Activated CD4-positive, alpha-beta memory T cell treated with anti-CD3 and anti-CD28 coated beads, Interleukin-2, amount 10 ng/mL, durations not matched to agents 7 days and 5 days (primary cell): ENCODE measurements at regions of chr1 and their contacts with region 1.

Region 1: GRCh38 chr1:5514519-5515183 is 477.6 kb downstream of the NPHP4 start:
- DNase-seq: peak; percentile 67
- H3K4me3 Mint-ChIP-seq: no peak overlapping the region
- H3K27ac Mint-ChIP-seq: no peak overlapping the region
- H3K4me1 Mint-ChIP-seq: no peaks in the 10 kb centered on the region
- H3K27me3 Mint-ChIP-seq: peaks cover 9% of the 10 kb centered on the region

Region 2: DNA sequence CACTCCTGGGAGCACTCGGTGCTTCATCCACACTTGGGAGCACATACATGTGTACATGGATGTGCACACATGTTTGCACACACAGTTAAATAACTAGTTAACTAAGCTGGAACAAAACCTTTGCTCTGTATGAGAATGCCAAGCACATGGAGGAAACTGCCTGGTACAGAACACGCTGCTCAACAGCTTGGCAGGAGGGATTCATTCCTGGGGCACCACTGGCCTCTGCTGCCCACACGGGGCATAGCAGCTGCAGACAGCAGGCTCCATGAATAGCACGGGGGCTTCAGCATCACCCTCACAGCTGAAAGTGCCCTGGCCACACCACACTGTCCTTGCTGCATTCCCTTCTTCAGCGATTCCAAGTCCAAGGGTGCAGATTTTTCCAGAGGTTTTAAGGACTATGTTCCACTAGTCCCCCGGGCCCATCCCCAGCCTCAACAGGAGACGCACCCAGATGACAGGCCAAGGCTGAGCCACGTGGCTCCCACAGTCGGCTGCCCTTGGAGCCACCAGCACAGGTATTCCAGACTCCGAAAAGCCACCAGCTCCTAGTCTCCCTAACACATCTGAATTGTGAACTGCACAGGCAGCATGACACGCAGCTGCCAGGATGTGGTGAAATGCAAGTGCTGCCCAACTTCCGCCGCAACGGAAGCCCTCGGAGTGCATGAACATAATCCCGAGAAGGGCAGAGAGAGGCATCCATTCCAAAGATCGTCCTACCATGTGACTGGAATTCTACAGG is 460.7 kb after region 1 on chr1:
- CTCF ChIA-PET with region 1: interaction called, 11 read pairs
- POLR2A ChIA-PET with region 1: no interaction called
- DNase-seq: peak; percentile 62
- H3K4me3 Mint-ChIP-seq: no peak overlapping the region
- H3K27ac Mint-ChIP-seq: peak overlapping the region; percentile 59
- H3K4me1 Mint-ChIP-seq: peaks cover 7% of the 10 kb centered on the region
- H3K27me3 Mint-ChIP-seq: no peaks in the 10 kb centered on the region